Aorta (tissue), 5 donors: ENCODE measurements at regions of chr9 and their contacts with region 1.

Region 1: DNA sequence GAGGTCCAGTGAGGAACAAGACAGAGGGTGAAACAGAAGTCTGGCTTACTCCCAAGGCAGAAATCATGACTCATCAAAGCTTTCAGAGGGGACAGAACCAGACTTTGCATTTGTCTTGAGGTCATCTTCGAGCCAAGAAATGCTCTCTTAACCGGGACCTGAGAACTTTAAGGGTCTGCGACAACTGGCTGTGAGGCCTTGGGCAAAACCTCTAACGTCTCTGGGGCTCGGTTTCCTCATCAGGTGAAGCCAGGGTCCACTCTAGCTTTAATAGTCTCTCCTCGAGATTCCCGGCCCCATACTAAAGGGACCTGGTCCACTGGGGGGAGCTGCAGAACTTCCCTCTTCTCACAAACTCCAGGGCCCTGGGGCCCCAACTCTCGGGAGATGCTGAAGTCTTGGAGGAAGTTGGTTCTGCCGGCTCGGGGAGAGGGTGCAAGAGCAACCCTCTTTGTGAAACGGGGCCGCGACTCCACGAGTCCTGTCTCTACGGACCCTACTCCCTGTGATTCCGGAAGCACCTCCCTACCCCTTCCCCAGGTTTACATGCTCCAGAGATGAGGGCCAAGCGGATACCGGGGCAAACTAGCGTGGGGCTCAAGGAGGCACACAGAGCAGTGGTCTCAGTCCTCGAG is 2.6 kb downstream of the GLIS3 start:
- DNase-seq: peak; percentile 88 to 90
- ATAC-seq: peak; percentile 56
- H3K4me3 ChIP-seq: peak overlapping the region; percentile 77 to 79
- H3K27ac ChIP-seq: peak overlapping the region; percentile 60 to 97
- H3K4me1 ChIP-seq: peaks cover 0 to 2% of the 10 kb centered on the region in 2 donors
- H3K27me3 ChIP-seq: no peaks in the 10 kb centered on the region

Region 2: GRCh38 chr9:3525836-3526164 is 771.5 kb before region 1 on chr9 and contains the start of gene RFX3:
- intact Hi-C with region 1: loop called (anchors 10 kb)
- DNase-seq: peak; percentile 94 to 97
- ATAC-seq: peak; percentile 97
- H3K4me3 ChIP-seq: peak within 1 kb of the TSS; percentile 83 to 91
- H3K27ac ChIP-seq: peak within 1 kb of the TSS; percentile 98 to 99
- H3K4me1 ChIP-seq: no peaks in the 10 kb centered on the region
- H3K27me3 ChIP-seq: no peaks in the 10 kb centered on the region
- total RNA-seq, gene RFX3: 10.5 to 22.4 TPM

Region 3: DNA sequence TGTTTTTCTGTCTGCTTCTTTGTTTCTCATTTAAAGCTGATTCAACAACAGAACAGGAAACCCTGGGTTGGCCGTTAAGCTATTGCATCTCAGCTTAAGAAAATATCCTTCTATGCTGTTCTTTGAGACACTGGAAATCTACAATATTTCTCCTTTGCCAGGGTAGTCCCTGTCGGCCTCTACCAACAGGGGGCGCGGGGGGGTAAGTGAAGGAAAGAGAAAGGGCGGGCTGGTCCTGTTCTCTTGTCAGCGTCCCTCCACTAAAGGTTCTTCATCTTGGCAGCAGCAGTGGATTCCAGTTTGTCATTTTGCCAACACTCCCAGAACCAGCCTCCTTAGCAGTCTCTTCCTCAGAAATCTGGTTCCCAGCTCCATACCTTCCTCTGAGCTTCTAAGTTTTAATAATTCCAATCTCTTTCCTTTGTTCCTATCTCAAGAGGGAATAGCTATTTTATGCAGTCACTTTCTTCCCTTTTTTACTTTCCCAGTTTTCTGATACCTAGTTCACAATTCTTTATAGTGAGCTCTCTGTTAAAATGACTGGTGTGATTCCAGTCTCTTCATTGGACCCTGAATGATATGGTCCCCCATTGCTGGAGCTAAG is 219.7 kb before region 1 on chr9:
- intact Hi-C with region 1: loop called in 1 of 2 experiments (anchors 5 kb)
- DNase-seq: peak; percentile 92 to 93
- ATAC-seq: peak; percentile 91
- H3K4me3 ChIP-seq: no peak overlapping the region
- H3K27ac ChIP-seq: peak overlapping the region in 1 of 2 donors; percentile 50
- H3K4me1 ChIP-seq: peaks cover 0 to 3% of the 10 kb centered on the region in 2 donors
- H3K27me3 ChIP-seq: no peaks in the 10 kb centered on the region

Region 4: DNA sequence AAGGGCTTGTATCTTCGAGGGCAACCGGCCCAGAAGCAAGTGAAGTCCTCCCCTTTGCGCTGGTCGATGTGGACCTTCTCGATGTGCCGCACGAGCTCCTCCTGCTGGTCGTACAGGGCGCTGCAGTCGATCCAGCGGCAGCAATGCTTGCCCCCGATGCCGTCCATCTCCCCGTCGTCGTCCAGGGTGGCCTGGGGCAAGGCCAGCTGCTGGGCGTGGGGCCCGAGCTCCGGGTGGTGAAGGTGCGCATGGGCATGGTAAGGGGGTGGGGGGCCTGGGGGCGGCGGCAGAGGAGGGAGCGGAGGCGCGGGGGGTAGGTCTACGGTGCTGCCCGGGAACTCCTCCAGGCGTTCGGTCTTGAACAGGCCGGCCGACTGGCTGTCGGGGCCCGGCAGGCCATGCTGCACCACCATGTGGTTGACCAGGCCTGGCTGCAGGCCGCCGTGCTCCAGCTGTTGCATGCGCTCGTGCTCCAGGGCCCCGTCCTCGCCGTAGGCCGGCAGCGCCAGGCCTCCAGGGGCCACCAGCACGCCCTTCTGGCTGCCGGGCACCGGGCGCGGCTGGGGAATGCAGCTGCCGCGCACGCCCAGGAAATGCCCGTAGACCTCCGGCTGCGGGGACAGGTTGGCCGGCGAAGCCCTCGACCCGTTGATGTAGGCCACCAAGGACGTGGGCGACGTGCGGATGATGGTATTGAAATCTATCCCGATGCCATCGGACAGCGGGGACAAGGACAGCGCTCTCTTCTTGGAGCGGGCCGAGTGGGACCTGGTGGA is 179.2 kb before region 1 on chr9:
- intact Hi-C with region 1: loop called (anchors 10 kb)
- DNase-seq: peak; percentile 52 to 78
- ATAC-seq: no peak
- H3K4me3 ChIP-seq: no peak overlapping the region
- H3K27ac ChIP-seq: peak overlapping the region in 1 of 2 donors; percentile 49
- H3K4me1 ChIP-seq: peaks cover 9 to 23% of the 10 kb centered on the region in 2 donors
- H3K27me3 ChIP-seq: no peaks in the 10 kb centered on the region

Region 5: DNA sequence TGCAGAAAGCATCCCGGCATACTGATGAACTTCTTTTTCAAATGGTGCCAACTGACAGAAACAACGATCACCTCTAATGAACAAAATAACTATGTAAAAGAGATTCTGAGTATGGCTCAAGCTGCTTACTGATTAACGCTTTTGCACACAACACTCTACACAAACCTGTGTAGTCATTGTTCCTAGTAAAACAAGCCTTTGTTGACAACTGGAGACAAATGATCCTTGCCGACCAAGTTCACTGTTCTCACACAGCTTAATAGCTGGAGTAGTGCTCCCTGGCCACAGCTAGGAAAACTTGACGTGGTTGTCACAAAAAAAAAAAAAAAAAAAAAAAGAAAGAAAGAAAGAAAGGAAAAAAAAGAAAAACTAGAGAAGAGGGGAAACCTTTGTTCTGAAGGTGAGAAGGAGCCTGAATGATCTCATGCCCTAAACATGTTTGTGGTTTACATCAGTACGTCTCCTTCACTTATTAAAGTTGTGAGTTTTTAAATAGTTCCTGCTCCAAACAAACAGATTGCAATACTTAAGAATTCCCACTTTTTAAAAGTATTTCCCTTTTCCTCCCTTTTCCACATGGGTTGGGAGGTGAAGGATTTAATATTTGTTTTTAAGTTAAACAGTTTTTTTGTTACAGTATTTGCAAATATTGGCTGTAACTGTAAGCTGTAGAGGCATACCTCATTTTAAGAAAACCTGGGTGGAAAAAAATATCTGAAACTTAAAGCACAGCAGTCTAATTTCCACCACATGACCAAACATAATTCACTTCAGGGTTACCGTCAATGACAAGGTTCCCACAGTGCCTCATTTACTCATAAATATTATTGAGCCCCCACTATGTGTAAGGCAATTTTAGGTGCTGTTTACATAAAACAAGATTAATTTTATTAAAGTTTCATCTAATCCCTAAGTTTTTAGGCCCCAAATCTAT is 61.1 kb before region 1 on chr9:
- intact Hi-C with region 1: loop called in 1 of 2 experiments (anchors 5 kb)
- DNase-seq: no peak
- ATAC-seq: no peak
- H3K4me3 ChIP-seq: no peak overlapping the region
- H3K27ac ChIP-seq: no peak overlapping the region
- H3K4me1 ChIP-seq: peaks cover 0 to 8% of the 10 kb centered on the region in 2 donors
- H3K27me3 ChIP-seq: no peaks in the 10 kb centered on the region

Region 6: GRCh38 chr9:4662108-4662988 is 365.1 kb after region 1 on chr9 and contains the start of gene PLPP6:
- intact Hi-C with region 1: loop called in 1 of 2 experiments (anchors 10 kb)
- DNase-seq: peak; percentile 92 to 95
- ATAC-seq: peak; percentile 96
- H3K4me3 ChIP-seq: peak within 1 kb of the TSS; percentile 61 to 62
- H3K27ac ChIP-seq: peak within 1 kb of the TSS; percentile 18 to 53
- H3K4me1 ChIP-seq: peaks cover 0 to 4% of the 10 kb centered on the region in 2 donors
- H3K27me3 ChIP-seq: no peaks in the 10 kb centered on the region
- total RNA-seq, gene PLPP6: 4.5 to 4.8 TPM